ENCODE measurements at regions of chr1 and their contacts with region 1.

Region 1: GRCh38 chr1:197924516-197925123 is 7.4 kb downstream of the LHX9 start:
- DNase-seq: no peak
- H3K4me3 ChIP-seq: no peak overlapping the region
- H3K27ac ChIP-seq: no peak overlapping the region
- H3K4me1 ChIP-seq: no peaks in the 10 kb centered on the region
- H3K27me3 ChIP-seq: peaks cover 29% of the 10 kb centered on the region
- CTCF ChIP-seq: peak; percentile 58

Region 2: DNA sequence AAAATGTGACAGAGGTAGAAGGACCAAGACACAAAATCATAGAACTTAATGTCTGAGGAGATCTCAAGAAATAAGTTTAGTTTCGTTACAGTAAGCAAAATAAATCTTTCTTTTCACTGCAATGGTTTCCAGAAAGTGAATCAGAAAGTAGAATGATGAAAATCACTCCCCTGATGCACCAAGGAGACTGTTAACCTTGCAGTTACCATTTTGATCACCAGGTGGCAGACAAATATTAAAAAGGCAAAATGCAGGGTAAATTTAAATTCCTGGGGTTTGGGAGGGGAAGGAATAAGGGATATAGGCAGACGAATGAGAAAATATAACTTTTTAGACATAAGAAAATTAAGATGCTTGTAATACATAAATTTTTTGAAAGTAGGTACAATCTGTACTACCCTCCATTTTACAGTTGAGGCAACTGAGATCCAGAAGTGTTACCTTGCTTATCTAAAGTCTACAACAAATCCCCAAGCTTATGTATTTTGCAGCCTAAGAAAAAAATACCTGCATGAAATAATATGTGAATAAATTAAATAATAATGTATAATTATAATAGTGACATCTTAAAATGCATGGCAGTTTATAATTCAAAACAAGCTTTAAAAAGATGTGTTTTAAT is 403.4 kb before region 1 on chr1:
- intact Hi-C with region 1: loop called (anchors 5 kb)
- DNase-seq: peak; percentile 21
- H3K4me3 ChIP-seq: no peak overlapping the region
- H3K27ac ChIP-seq: no peak overlapping the region
- H3K4me1 ChIP-seq: no peaks in the 10 kb centered on the region
- H3K27me3 ChIP-seq: no peaks in the 10 kb centered on the region
- CTCF ChIP-seq: peak; percentile 51

Region 3: GRCh38 chr1:197807216-197807615 is 117.4 kb before region 1 on chr1:
- intact Hi-C with region 1: no loop called
- DNase-seq: no peak
- H3K4me3 ChIP-seq: no peak overlapping the region
- H3K27ac ChIP-seq: no peak overlapping the region
- H3K4me1 ChIP-seq: peaks cover 4% of the 10 kb centered on the region
- H3K27me3 ChIP-seq: no peaks in the 10 kb centered on the region
- CTCF ChIP-seq: no peak

Region 4: GRCh38 chr1:198340139-198340538 is 415.5 kb after region 1 on chr1:
- intact Hi-C with region 1: no loop called
- DNase-seq: no peak
- H3K4me3 ChIP-seq: no peak overlapping the region
- H3K27ac ChIP-seq: no peak overlapping the region
- H3K4me1 ChIP-seq: no peaks in the 10 kb centered on the region
- H3K27me3 ChIP-seq: no peaks in the 10 kb centered on the region
- CTCF ChIP-seq: no peak

Measured in colonic mucosa (tissue), 4 donors.